ENCODE measurements at regions of chr5 and their contacts with region 1.

Region 1: GRCh38 chr5:159515909-159516415 is 185.7 kb upstream of the IL12B start:
- DNase-seq: peak; percentile 17
- ATAC-seq: peak; percentile 92
- H3K4me3 ChIP-seq: no peak overlapping the region
- H3K27ac ChIP-seq: no peak overlapping the region
- H3K4me1 ChIP-seq: no peaks in the 10 kb centered on the region
- H3K27me3 ChIP-seq: peaks cover 0 to 13% of the 10 kb centered on the region in 2 experiments; a peak in 3 of 5 replicates
- CTCF ChIP-seq: peak; percentile 78
- EP300 ChIP-seq: no peak
- POLR2A ChIP-seq: no peak
- RAD21 ChIP-seq: no peak

Region 2: DNA sequence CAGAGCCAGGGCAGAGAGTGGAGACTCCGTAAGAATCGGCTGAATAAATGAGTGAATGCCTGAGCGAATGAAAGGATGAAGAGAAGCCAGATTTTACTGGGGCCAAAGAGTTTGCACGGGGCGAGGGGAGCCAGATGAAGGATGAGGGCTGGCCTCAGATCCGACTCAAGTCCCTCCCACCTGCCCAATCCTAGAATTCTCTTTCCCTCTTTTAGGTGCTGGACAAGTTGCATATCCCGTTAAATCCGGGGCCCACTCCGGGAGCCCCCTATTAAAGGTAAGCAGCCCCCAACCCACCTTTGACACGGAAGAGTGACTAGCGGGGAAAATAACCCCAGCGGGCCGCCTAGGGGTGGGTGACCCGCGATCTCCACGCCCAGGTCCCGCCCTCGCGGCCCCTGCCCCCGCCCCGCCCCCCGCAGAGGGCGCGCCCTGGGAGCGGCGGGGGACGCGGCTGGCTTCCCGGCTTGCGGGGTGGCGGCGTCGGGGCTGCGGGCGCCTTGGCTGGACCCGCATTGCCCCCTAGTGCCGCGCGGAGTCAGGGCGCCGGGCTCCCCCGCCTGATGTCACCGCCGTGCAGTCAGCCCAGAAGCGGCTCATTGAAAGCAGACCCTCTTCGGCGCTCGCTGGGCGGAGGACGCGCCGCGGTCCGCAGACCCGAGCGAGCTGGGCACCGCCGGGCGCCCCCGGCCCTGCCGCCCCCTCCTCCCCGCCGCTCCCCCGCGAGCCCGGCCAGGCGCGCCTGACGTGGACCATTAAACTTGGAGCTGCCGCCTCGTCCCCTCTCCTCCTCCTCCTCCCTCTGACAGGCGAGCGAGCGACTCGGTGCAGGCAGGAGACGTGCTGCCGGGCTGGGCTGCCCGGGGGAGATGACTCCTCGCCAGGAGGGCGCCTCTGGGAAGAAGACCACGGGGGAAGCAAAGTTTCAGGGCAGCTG is 400.2 kb after region 1 on chr5 and contains the start of gene ADRA1B:
- CTCF ChIA-PET with region 1: no interaction called
- POLR2A ChIA-PET with region 1: no interaction called
- in situ Hi-C with region 1: no loop called
- intact Hi-C with region 1: loop called (anchors 10 kb)
- DNase-seq: peak; percentile 10
- ATAC-seq: peak; percentile 97
- H3K4me3 ChIP-seq: peak within 1 kb of the TSS in 2 of 3 experiments; percentile 26 to 31; a peak in 2 of 6 replicates
- H3K27ac ChIP-seq: no peak within 1 kb of the TSS
- H3K4me1 ChIP-seq: no peaks in the 10 kb centered on the region
- H3K27me3 ChIP-seq: peaks cover 2 to 44% of the 10 kb centered on the region in 2 experiments; a peak in 4 of 5 replicates
- CTCF ChIP-seq: peak; percentile 71
- EP300 ChIP-seq: no peak
- POLR2A ChIP-seq: no peak
- RAD21 ChIP-seq: peak; percentile 74
- total RNA-seq, gene ADRA1B: not detected in 2 replicates

Measured in HepG2 (cell line).